ENCODE measurements at regions of chr13 and their contacts with region 1.

Region 1: GRCh38 chr13:35712907-35713761 is 236.6 kb upstream of the MAB21L1 start:
- DNase-seq: peak; percentile 96
- H3K4me3 ChIP-seq: 0 out of 2 replicates have a peak overlapping the region, but pooled peaks have one; percentile 18
- H3K27me3 ChIP-seq: no peaks in the 10 kb centered on the region
- CTCF ChIP-seq: no peak; the same call in 1 of the 2 replicates

Region 2: GRCh38 chr13:35475960-35476943 is 236.9 kb before region 1 on chr13 and contains the start of gene MAB21L1:
- CTCF ChIA-PET with region 1: interaction called, 6 read pairs
- POLR2A ChIA-PET with region 1: interaction called, 30 read pairs
- DNase-seq: peak; percentile 83
- H3K4me3 ChIP-seq: peak within 1 kb of the TSS; percentile 94
- H3K27me3 ChIP-seq: no peaks in the 10 kb centered on the region
- CTCF ChIP-seq: no peak
- polyA plus RNA-seq, gene MAB21L1: 65.6 and 67.9 TPM in 2 replicates

Region 3: GRCh38 chr13:35699805-35700510 is 13.2 kb before region 1 on chr13:
- CTCF ChIA-PET with region 1: interaction called, 25 read pairs
- POLR2A ChIA-PET with region 1: interaction called, 19 read pairs
- DNase-seq: peak; percentile 90
- H3K4me3 ChIP-seq: peak overlapping the region; percentile 24
- H3K27me3 ChIP-seq: no peaks in the 10 kb centered on the region
- CTCF ChIP-seq: no peak

Region 4: GRCh38 chr13:35789335-35790165 is 76.4 kb after region 1 on chr13:
- CTCF ChIA-PET with region 1: interaction called, 23 read pairs
- POLR2A ChIA-PET with region 1: no interaction called
- DNase-seq: no peak
- H3K4me3 ChIP-seq: no peak overlapping the region
- H3K27me3 ChIP-seq: no peaks in the 10 kb centered on the region
- CTCF ChIP-seq: peak; percentile 60

Region 5: GRCh38 chr13:36332986-36333385 is 619.9 kb after region 1 on chr13:
- CTCF ChIA-PET with region 1: no interaction called
- POLR2A ChIA-PET with region 1: no interaction called
- DNase-seq: no peak
- H3K4me3 ChIP-seq: no peak overlapping the region
- H3K27me3 ChIP-seq: no peaks in the 10 kb centered on the region
- CTCF ChIP-seq: no peak

Region 6: GRCh38 chr13:36533806-36534205 is 820.7 kb after region 1 on chr13:
- CTCF ChIA-PET with region 1: no interaction called
- POLR2A ChIA-PET with region 1: no interaction called
- DNase-seq: no peak
- H3K4me3 ChIP-seq: no peak overlapping the region
- H3K27me3 ChIP-seq: no peaks in the 10 kb centered on the region
- CTCF ChIP-seq: no peak

Measured in BJ (cell line).